ENCODE measurements at regions of chr21 and their contacts with region 1.

Region 1: GRCh38 chr21:15121655-15122120 is 56.9 kb upstream of the NRIP1 start:
- DNase-seq: peak; percentile 59 to 80
- ATAC-seq: peak; percentile 88 to 92 (median 90)
- H3K4me3 ChIP-seq: peak overlapping the region; percentile 43
- H3K27ac ChIP-seq: peak overlapping the region; percentile 90
- H3K4me1 ChIP-seq: peaks cover 28% of the 10 kb centered on the region
- H3K27me3 ChIP-seq: no peaks in the 10 kb centered on the region
- CTCF ChIP-seq: no peak

Region 2: GRCh38 chr21:14864211-14865021 is 257.3 kb before region 1 on chr21:
- intact Hi-C with region 1: loop called in 1 of 2 experiments (anchors 10 kb)
- DNase-seq: peak; percentile 70 to 77
- ATAC-seq: peak; percentile 93 to 96 (median 94)
- H3K4me3 ChIP-seq: no peak overlapping the region
- H3K27ac ChIP-seq: peak overlapping the region; percentile 44
- H3K4me1 ChIP-seq: peaks cover 9% of the 10 kb centered on the region
- H3K27me3 ChIP-seq: no peaks in the 10 kb centered on the region
- CTCF ChIP-seq: peak; percentile 66

Region 3: GRCh38 chr21:15164678-15165303 is 43.1 kb after region 1 on chr21:
- intact Hi-C with region 1: loop called in 1 of 2 experiments (anchors 2 kb)
- DNase-seq: no peak
- ATAC-seq: peak; percentile 94 to 95 (median 94)
- H3K4me3 ChIP-seq: no peak overlapping the region
- H3K27ac ChIP-seq: peak overlapping the region; percentile 79
- H3K4me1 ChIP-seq: peaks cover 12% of the 10 kb centered on the region
- H3K27me3 ChIP-seq: no peaks in the 10 kb centered on the region
- CTCF ChIP-seq: no peak

Region 4: GRCh38 chr21:15221799-15222386 is 100.2 kb after region 1 on chr21:
- intact Hi-C with region 1: loop called in 1 of 2 experiments (anchors 5 kb)
- DNase-seq: peak; percentile 50 to 57
- ATAC-seq: peak; percentile 97 to 99 (median 98)
- H3K4me3 ChIP-seq: no peak overlapping the region
- H3K27ac ChIP-seq: peak overlapping the region; percentile 55
- H3K4me1 ChIP-seq: peaks cover 26% of the 10 kb centered on the region
- H3K27me3 ChIP-seq: no peaks in the 10 kb centered on the region
- CTCF ChIP-seq: no peak

Measured in psoas muscle (tissue), 8 donors.